Activated B cell treated with CpG ODN at 0.5 μM for 24 hours (primary cell): ENCODE measurements at regions of chr19 and their contacts with region 1.

Region 1: DNA sequence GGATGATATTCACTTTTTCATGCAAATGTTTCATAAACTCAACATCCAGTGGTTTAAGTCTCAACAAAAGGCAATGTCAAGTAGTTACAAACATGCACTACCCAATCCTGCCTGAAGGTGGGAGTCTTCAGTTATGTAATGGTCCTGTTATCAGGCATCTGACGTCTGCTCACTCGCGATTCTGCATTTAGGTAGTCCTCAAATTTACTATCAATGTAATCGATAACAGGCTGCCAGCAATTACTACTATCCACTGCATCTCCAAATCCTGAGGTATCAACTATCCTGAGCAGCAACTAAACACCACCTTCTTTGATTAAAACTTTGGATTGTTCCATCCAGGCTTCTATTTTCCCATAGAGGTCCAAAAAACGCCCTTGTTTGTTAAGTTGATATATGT is 51.2 kb downstream of the NLRP12 start:
- DNase-seq: no peak
- ATAC-seq: peak; percentile 25
- H3K4me3 Mint-ChIP-seq: no peak overlapping the region
- H3K27ac Mint-ChIP-seq: no peak overlapping the region
- H3K4me1 Mint-ChIP-seq: peaks cover 2% of the 10 kb centered on the region
- H3K27me3 Mint-ChIP-seq: no peaks in the 10 kb centered on the region
- CTCF ChIP-seq: peak; percentile 26

Region 2: DNA sequence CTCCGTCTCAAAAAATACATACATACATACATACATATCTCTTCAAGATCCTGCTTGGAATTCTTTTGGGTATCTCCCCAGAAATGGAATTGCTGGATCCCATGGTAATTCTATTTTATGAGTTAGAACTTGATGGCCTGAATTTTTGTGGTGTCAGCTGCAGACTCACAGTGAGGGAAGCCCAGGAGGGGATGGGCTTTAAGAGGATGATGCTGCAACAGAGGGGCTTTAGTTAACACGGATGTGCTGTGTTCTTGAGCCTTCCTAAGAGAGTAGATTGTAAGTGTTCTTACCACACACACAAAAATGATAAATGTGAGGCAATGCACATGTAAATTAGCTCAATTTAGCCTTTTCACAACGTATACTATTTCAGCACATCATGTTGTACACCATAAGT is 250.2 kb after region 1 on chr19:
- CTCF ChIA-PET with region 1: interaction called, 3 read pairs
- POLR2A ChIA-PET with region 1: no interaction called
- intact Hi-C with region 1: loop called (anchors 5 kb)
- DNase-seq: no peak
- ATAC-seq: no peak
- H3K4me3 Mint-ChIP-seq: no peak overlapping the region
- H3K27ac Mint-ChIP-seq: no peak overlapping the region
- H3K4me1 Mint-ChIP-seq: peaks cover 6% of the 10 kb centered on the region
- H3K27me3 Mint-ChIP-seq: peaks cover 26% of the 10 kb centered on the region
- CTCF ChIP-seq: no peak

Region 3: DNA sequence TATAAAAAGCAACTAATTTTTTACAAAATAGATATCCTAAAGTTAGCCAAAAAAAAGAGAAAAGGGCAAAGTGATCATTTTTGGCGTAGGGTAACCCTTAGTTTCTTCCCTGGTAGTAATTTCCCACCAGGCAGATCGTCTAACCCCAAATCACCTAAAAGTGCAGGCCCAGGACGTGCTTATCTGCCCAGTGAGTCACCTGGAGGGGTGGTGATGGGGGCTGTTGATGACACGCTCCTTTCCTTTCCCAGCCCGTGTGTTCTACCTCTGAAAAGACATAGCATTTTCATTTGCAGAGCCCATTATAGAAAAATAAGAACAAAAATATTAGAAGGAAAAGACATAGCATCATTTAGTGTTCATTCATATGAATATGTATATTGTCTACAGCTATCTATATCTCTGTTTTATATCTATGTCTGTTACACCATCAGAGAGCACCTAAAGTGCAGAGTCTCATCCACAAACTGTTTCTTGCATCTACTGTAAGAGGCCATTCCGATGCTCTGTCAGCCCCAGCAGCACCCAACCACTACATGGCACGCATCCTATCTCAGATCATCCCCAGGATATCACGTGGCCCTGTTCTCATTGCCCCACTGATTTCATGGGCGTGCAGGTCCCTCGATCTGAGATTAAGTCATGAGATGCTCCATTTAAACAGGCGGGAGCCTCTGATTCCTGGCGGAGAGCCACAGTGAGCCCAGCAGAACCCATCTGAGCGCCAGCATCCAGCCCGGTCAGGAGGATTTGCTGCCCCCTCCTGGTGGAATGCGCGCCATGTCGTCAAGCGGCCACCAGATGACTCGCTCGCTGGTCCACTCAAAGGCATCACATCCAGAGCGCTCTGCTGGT is 458.4 kb after region 1 on chr19:
- CTCF ChIA-PET with region 1: no interaction called
- POLR2A ChIA-PET with region 1: no interaction called
- intact Hi-C with region 1: loop called (anchors 2 kb)
- DNase-seq: peak; percentile 73
- ATAC-seq: peak; percentile 96
- H3K4me3 Mint-ChIP-seq: no peak overlapping the region
- H3K27ac Mint-ChIP-seq: no peak overlapping the region
- H3K4me1 Mint-ChIP-seq: peaks cover 6% of the 10 kb centered on the region
- H3K27me3 Mint-ChIP-seq: peaks cover 44% of the 10 kb centered on the region
- CTCF ChIP-seq: no peak